ENCODE measurements at regions of chr12 and their contacts with region 1.

Region 1: GRCh38 chr12:4763549-4763948 is 43.3 kb downstream of the GALNT8 start:
- DNase-seq: peak; percentile 79 to 88
- H3K4me3 ChIP-seq: no peak overlapping the region; a peak in 1 of 8 replicates
- H3K27ac ChIP-seq: no peak overlapping the region
- H3K4me1 ChIP-seq: peaks cover 0 to 3% (median 2%) of the 10 kb centered on the region in 4 experiments; a peak in 3 of 7 replicates
- H3K27me3 ChIP-seq: no peaks in the 10 kb centered on the region
- CTCF ChIP-seq: peak; percentile 86 to 93 (median 87)
- EP300 ChIP-seq: no peak
- POLR2A ChIP-seq: no peak
- RAD21 ChIP-seq: peak; percentile 69 to 74

Region 2: GRCh38 chr12:4579305-4580102 is 184.0 kb before region 1 on chr12:
- CTCF ChIA-PET with region 1: interaction called, 12 read pairs
- POLR2A ChIA-PET with region 1: no interaction called
- DNase-seq: no peak
- H3K4me3 ChIP-seq: no peak overlapping the region
- H3K27ac ChIP-seq: no peak overlapping the region
- H3K4me1 ChIP-seq: peaks cover 0 to 10% (median 2%) of the 10 kb centered on the region in 4 experiments; a peak in 3 of 7 replicates
- H3K27me3 ChIP-seq: no peaks in the 10 kb centered on the region
- CTCF ChIP-seq: peak; percentile 29 to 63 (median 51)
- EP300 ChIP-seq: no peak
- POLR2A ChIP-seq: no peak
- RAD21 ChIP-seq: peak; percentile 72 to 84

Region 3: GRCh38 chr12:4591180-4591687 is 172.3 kb before region 1 on chr12:
- CTCF ChIA-PET with region 1: interaction called, 22 read pairs
- POLR2A ChIA-PET with region 1: no interaction called
- DNase-seq: no peak
- H3K4me3 ChIP-seq: no peak overlapping the region
- H3K27ac ChIP-seq: no peak overlapping the region
- H3K4me1 ChIP-seq: no peaks in the 10 kb centered on the region
- H3K27me3 ChIP-seq: no peaks in the 10 kb centered on the region; a peak in 2 of 7 replicates
- CTCF ChIP-seq: no peak
- EP300 ChIP-seq: no peak
- POLR2A ChIP-seq: no peak
- RAD21 ChIP-seq: no peak

Region 4: GRCh38 chr12:4604684-4605193 is 158.8 kb before region 1 on chr12:
- CTCF ChIA-PET with region 1: interaction called, 15 read pairs
- POLR2A ChIA-PET with region 1: no interaction called
- DNase-seq: peak; percentile 21 to 79
- H3K4me3 ChIP-seq: peak overlapping the region; percentile 68 to 96 (median 86)
- H3K27ac ChIP-seq: peak overlapping the region; percentile 27; the same call in 1 of the 2 replicates
- H3K4me1 ChIP-seq: no peaks in the 10 kb centered on the region
- H3K27me3 ChIP-seq: no peaks in the 10 kb centered on the region
- CTCF ChIP-seq: peak; percentile 83 to 98 (median 91)
- EP300 ChIP-seq: 0 out of 3 replicates have a peak, but pooled peaks of 1 of the 2 experiments have one; percentile 8
- POLR2A ChIP-seq: peak in 1 of 2 experiments; percentile 55; a peak in 2 of 3 replicates
- RAD21 ChIP-seq: peak; percentile 68 to 78

Region 5: GRCh38 chr12:4717806-4718205 is 45.7 kb before region 1 on chr12:
- CTCF ChIA-PET with region 1: interaction called, 10 read pairs
- POLR2A ChIA-PET with region 1: interaction called, 3 read pairs
- DNase-seq: no peak
- H3K4me3 ChIP-seq: no peak overlapping the region
- H3K27ac ChIP-seq: no peak overlapping the region
- H3K4me1 ChIP-seq: peaks cover 6 to 25% (median 17%) of the 10 kb centered on the region in 4 experiments
- H3K27me3 ChIP-seq: no peaks in the 10 kb centered on the region
- CTCF ChIP-seq: peak in 2 of 3 experiments; percentile 19 to 28; a peak in 3 of 4 replicates
- EP300 ChIP-seq: no peak
- POLR2A ChIP-seq: no peak
- RAD21 ChIP-seq: peak; percentile 46 to 56